BJ (cell line): ENCODE measurements at regions of chr9 and their contacts with region 1.

Region 1: DNA sequence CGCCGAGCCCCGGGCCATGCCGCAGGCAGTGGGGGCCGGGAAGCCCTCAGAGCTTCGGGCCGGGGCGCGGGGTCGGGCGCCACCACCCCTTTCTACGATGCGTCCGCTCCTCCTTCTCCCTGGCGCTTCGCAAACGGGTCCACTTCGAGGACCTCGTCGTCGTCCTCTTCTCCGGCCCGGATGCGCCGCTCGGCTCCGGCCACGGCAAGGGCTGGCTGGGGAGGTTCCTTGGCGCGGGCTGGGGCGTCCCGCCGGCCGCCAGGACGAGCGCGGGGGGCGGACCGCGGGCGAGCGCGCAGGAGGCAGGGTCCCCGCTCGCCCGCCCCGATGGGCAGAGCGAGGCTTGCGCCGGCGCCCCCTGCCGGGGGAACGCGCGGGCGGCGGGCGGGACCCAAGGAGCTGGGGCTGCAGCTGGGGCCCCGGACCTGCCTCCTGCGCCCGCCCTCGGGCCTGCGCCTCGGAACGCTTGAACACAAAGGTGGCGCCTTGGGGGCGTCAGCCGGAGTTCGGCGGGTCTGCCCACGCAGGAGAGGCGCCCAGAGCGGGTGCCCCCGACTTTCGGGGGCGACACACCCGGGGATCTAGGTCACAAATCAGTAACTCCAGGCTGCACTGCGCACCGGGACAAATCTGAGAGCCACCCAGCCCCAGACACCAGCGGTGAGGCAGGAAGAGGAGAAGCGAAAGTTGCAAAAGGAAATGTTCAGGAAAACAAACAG is at the start of gene ROR2:
- DNase-seq: no peak
- H3K4me3 ChIP-seq: peak within 1 kb of the TSS; percentile 49
- H3K27me3 ChIP-seq: peaks cover 17% of the 10 kb centered on the region
- CTCF ChIP-seq: no peak; the same call in 1 of the 2 replicates
- polyA plus RNA-seq, gene ROR2: 0.59 and 1.1 TPM in 2 replicates

Region 2: DNA sequence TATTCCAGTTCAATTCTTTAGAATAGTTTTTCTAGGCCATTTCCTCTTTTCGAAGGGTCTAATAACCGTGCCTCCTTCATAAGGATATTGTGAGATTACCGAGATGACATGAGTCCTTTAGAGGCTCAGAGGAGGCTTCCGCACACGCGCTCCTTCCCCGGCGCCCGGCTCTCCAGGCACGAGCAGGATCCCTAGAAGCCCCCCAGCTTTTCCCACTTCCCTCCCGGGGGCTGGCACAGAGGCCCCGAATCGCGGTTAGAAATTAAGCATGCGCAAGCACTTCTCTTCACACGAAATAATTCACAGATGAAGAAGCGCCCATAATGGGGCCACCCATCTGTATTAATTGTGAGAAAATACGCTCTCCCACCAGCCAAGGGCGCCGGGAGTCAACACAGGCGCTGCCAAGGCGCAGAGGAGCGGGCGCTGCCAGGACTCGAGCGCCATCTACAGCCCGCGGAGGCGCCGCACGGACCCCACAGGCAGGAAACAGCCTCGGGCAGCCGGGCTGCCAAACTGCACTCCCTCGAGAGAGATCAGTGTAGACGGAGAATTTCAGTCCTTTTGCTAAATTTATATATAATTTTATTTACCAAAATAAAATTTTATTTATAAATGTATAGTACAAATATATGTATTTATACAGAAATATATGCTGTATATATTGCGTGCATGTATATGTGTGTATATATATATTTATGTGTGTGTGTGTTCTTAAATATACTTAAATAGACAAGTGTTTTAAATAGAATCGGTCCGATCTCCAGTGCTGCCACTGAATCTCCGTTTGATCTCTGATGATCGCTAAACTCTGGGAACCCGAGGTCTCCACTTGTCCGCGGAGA is 268.4 kb before region 1 on chr9:
- CTCF ChIA-PET with region 1: no interaction called
- POLR2A ChIA-PET with region 1: no interaction called
- DNase-seq: no peak
- H3K4me3 ChIP-seq: no peak overlapping the region
- H3K27me3 ChIP-seq: no peaks in the 10 kb centered on the region
- CTCF ChIP-seq: peak; percentile 85

Region 3: DNA sequence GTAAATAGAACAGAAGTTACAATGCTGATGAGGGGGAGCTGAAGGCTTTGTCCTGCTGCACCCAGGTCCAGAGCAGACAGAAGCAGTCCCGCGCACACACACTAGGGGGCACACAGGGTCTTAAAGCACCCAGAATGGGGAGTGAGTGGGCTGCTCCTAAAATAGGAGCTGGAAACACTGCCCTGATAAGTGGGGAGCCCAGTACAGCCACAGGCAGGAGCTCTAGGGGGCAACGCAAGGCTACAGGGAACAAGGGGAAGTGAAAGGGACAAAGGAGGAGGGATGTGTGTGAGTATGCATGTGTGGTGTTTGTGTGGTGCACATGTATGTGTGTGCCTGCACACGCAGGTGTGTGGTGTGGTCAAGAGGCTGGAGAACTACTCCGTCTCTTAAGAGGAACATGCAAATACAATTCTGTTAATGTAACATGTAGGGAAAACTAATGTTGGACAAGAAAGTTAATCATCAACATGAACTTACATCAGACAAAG is 191.6 kb before region 1 on chr9:
- CTCF ChIA-PET with region 1: interaction called, 51 read pairs
- POLR2A ChIA-PET with region 1: no interaction called
- DNase-seq: no peak
- H3K4me3 ChIP-seq: no peak overlapping the region
- H3K27me3 ChIP-seq: no peaks in the 10 kb centered on the region; the same call in 1 of the 2 replicates
- CTCF ChIP-seq: peak; percentile 86

Region 4: GRCh38 chr9:91933556-91934352 is 16.4 kb before region 1 on chr9:
- CTCF ChIA-PET with region 1: interaction called, 10 read pairs
- POLR2A ChIA-PET with region 1: no interaction called
- DNase-seq: no peak
- H3K4me3 ChIP-seq: no peak overlapping the region
- H3K27me3 ChIP-seq: no peaks in the 10 kb centered on the region
- CTCF ChIP-seq: no peak

Region 5: GRCh38 chr9:91978739-91979414 is 28.8 kb after region 1 on chr9:
- CTCF ChIA-PET with region 1: interaction called, 39 read pairs
- POLR2A ChIA-PET with region 1: no interaction called
- DNase-seq: peak; percentile 86
- H3K4me3 ChIP-seq: no peak overlapping the region
- H3K27me3 ChIP-seq: peaks cover 5% of the 10 kb centered on the region; the same call in 1 of the 2 replicates
- CTCF ChIP-seq: peak; percentile 48

Region 6: DNA sequence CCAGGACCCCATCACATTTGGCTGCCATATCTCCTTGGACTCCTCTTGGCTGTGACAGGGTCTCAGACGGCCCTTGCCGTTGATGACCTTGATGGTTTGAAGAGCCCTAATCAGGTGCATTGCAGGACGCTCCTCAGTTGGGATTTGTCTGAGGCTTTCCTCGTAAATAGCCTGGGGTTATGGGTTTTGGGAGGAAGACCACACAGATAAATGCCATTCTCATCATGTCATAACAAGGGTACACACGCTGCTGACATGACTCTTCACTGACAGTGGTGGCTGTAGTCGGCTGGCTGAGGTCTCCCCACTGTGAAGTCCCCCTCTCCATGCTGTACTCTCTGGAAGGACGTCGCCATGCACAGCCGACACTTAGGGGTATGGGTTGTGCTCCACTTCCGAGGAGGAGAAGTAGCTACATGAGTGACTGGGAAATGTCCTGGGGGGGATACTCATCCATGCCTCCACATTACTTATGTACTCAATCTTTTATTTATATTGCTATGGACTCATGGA is 208.0 kb after region 1 on chr9:
- CTCF ChIA-PET with region 1: no interaction called
- POLR2A ChIA-PET with region 1: no interaction called
- DNase-seq: no peak
- H3K4me3 ChIP-seq: no peak overlapping the region
- H3K27me3 ChIP-seq: 0 out of 2 replicates have a peak, but pooled peaks cover 1% of the 10 kb centered on the region
- CTCF ChIP-seq: no peak